Mammary epithelial cell (primary cell): ENCODE measurements at regions of chr5 and their contacts with region 1.

Region 1: DNA sequence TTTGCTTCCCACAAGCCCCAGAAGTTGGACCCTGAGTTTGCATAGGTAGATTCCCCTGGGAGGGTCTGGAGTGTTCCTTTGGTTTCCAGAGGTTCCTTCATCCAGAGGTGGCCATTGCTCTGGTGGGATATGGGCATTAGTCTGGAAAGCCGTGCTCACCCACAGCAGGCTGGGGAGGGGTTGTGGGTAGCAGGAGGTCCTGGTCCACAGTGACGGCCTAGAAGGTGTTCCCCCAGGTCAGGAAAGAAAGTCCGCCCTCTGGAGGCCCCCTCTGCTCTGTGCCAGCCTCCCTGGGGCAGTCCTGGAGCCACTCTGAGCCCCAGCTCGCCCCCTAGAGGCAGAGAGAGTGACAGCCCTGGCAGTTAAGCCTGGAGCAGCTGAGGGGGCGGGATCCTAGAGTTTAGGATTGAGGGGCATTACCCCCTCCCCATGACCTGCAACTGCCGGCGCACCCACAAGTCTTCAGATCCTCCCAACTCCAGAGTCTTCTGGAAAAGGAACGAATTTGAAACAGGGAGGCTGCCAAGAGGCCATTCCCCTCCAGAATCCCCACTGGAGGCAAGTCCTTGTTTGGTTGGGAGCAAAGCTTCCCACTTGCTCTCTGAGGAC is 36.8 kb downstream of the NDST1 start:
- DNase-seq: peak; percentile 44
- H3K4me3 ChIP-seq: no peak overlapping the region
- H3K27ac ChIP-seq: no peak overlapping the region
- H3K4me1 ChIP-seq: peaks cover 27% of the 10 kb centered on the region
- H3K27me3 ChIP-seq: no peaks in the 10 kb centered on the region
- CTCF ChIP-seq: peak; percentile 74 to 94

Region 2: DNA sequence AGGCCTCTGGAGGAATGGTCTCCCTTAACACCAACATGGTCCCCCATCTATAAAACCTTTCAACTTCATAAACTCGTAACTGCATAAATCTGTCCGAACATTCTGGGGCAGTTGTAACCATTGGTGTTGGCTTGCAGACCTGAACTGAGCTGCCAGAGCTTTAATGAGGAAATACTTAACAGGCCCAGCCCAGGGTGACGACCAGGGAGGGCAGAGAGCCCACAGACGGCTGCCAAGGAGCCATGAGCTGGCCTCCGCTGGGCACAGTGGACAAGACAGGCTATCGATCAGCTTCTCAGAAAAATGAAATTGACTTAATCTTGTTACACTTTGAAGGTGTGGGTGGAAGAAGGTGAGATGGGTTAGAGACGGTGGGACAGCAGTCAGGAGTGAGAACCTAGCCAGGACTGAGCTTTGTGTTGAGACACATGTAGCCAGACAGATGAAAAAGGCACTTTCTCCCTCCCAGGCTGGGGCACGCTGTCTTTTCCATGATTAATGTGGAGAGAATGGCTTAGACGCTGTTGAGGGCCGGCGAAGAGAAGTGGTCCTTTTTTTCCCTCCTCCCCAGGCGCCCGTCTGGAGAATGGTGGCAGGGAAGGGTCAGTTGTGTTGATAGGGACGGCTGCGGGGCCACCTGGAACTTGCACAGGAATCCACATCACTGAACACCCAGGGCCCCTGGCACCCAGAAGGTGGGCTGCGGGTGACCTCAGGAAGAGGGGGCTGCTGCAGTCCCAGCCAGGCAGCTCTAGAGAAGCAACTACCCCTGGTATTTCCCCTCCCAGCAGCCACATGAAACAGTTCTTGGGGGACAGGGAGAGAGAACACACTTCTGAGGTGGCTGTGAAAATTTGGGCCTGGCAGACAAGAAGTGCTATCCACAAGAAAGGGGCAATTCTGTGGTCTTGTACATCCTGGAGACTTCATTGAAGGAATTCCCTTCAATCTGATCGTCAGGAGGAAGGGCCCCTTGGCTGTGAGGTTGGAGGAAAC is 214.5 kb before region 1 on chr5:
- CTCF ChIA-PET with region 1: no interaction called
- dilution Hi-C with region 1: no loop called
- in situ Hi-C with region 1: no loop called
- intact Hi-C with region 1: no loop called
- DNase-seq: no peak
- H3K4me3 ChIP-seq: no peak overlapping the region
- H3K27ac ChIP-seq: no peak overlapping the region
- H3K4me1 ChIP-seq: no peaks in the 10 kb centered on the region
- H3K27me3 ChIP-seq: no peaks in the 10 kb centered on the region
- CTCF ChIP-seq: no peak

Region 3: GRCh38 chr5:150419630-150420270 is 125.0 kb before region 1 on chr5:
- CTCF ChIA-PET with region 1: no interaction called
- dilution Hi-C with region 1: no loop called
- in situ Hi-C with region 1: no loop called
- intact Hi-C with region 1: no loop called
- DNase-seq: no peak
- H3K4me3 ChIP-seq: no peak overlapping the region
- H3K27ac ChIP-seq: no peak overlapping the region
- H3K4me1 ChIP-seq: no peaks in the 10 kb centered on the region
- H3K27me3 ChIP-seq: no peaks in the 10 kb centered on the region
- CTCF ChIP-seq: no peak

Region 4: GRCh38 chr5:150511578-150512367 is 32.9 kb before region 1 on chr5:
- CTCF ChIA-PET with region 1: no interaction called
- dilution Hi-C with region 1: loop called (anchors 5 kb)
- in situ Hi-C with region 1: no loop called
- intact Hi-C with region 1: no loop called
- DNase-seq: peak; percentile 74
- H3K4me3 ChIP-seq: no peak overlapping the region
- H3K27ac ChIP-seq: no peak overlapping the region
- H3K4me1 ChIP-seq: peaks cover 52% of the 10 kb centered on the region
- H3K27me3 ChIP-seq: no peaks in the 10 kb centered on the region
- CTCF ChIP-seq: no peak

Region 5: GRCh38 chr5:150636401-150637244 is 91.9 kb after region 1 on chr5:
- CTCF ChIA-PET with region 1: no interaction called
- dilution Hi-C with region 1: no loop called
- in situ Hi-C with region 1: no loop called
- intact Hi-C with region 1: no loop called
- DNase-seq: peak; percentile 71
- H3K4me3 ChIP-seq: no peak overlapping the region
- H3K27ac ChIP-seq: no peak overlapping the region
- H3K4me1 ChIP-seq: peaks cover 57% of the 10 kb centered on the region
- H3K27me3 ChIP-seq: no peaks in the 10 kb centered on the region
- CTCF ChIP-seq: no peak